A673 (cell line): ENCODE measurements at regions of chr20 and their contacts with region 1.

Region 1: GRCh38 chr20:50029697-50030461 is 47.1 kb downstream of the SNAI1 start:
- DNase-seq: no peak
- H3K4me3 ChIP-seq: no peak overlapping the region
- H3K27ac ChIP-seq: no peak overlapping the region
- H3K4me1 ChIP-seq: no peaks in the 10 kb centered on the region
- H3K27me3 ChIP-seq: no peaks in the 10 kb centered on the region
- CTCF ChIP-seq: no peak

Region 2: GRCh38 chr20:49999329-49999728 is 30.6 kb before region 1 on chr20:
- CTCF ChIA-PET with region 1: no interaction called
- POLR2A ChIA-PET with region 1: interaction called, 15 read pairs
- intact Hi-C with region 1: no loop called
- DNase-seq: no peak
- H3K4me3 ChIP-seq: no peak overlapping the region
- H3K27ac ChIP-seq: no peak overlapping the region
- H3K4me1 ChIP-seq: no peaks in the 10 kb centered on the region
- H3K27me3 ChIP-seq: no peaks in the 10 kb centered on the region
- CTCF ChIP-seq: no peak

Region 3: DNA sequence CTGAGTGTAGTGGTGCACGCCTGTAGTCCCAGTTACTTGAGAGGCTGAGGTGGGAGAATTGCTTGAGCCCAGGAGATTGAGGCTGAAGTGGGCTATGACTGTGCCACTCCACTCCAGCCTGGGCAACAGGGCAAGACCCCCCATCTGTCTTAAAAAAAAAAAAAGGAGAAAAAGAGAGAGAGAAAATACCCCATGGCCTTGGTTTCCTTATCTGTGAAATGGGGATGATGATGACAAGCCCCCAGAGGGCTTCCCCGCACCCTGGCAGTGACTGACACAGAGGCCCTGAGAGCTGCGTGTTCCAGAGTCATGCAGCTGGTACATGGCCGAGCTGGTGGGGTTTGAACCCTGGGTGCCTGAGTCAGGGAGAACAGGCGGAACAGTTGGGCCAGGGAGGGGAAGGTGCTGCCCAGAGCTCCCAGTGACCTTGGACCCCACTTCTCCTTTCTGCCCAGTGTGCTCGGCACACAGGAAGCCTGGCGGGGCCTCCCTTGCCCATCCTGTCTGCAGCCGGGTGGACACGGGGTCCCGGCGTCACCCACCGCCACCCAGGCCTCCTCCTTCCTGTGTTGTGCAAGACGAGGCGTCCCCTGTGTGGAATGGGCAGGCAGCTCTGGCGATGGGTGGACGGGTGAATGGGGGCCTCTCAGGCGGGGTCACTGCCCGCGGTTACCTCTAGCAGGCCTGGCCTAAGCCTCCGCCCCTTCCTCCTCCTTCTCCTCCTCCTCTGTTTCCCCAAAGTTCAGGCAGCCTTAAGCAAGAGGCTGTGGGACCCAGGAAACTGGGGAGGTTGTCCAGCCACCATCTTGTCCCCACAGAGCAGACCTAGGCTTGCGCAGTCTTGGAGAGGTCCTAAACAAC is 244.9 kb after region 1 on chr20:
- CTCF ChIA-PET with region 1: no interaction called
- POLR2A ChIA-PET with region 1: no interaction called
- intact Hi-C with region 1: no loop called
- DNase-seq: no peak
- H3K4me3 ChIP-seq: no peak overlapping the region
- H3K27ac ChIP-seq: no peak overlapping the region
- H3K4me1 ChIP-seq: no peaks in the 10 kb centered on the region
- H3K27me3 ChIP-seq: no peaks in the 10 kb centered on the region
- CTCF ChIP-seq: no peak